CD14-positive monocyte (primary cell): ENCODE measurements at regions of chr16 and their contacts with region 1.

Region 1: GRCh38 chr16:72978212-72978611 is 69.7 kb downstream of the ZFHX3 start:
- DNase-seq: peak; percentile 28 to 74 (median 42)
- H3K4me3 ChIP-seq: no peak overlapping the region
- H3K4me3 Mint-ChIP-seq: no peak overlapping the region
- H3K27ac ChIP-seq: peak overlapping the region in 1 of 2 donors; percentile 12
- H3K27ac Mint-ChIP-seq: peak overlapping the region; percentile 79 to 93 (median 89)
- H3K4me1 ChIP-seq: peaks cover 30 to 32% of the 10 kb centered on the region in 2 donors
- H3K4me1 Mint-ChIP-seq: peaks cover 33% of the 10 kb centered on the region
- H3K27me3 ChIP-seq: no peaks in the 10 kb centered on the region
- H3K27me3 Mint-ChIP-seq: peaks cover 0 to 3% (median 3%) of the 10 kb centered on the region in 3 donors
- CTCF ChIP-seq: no peak

Region 2: DNA sequence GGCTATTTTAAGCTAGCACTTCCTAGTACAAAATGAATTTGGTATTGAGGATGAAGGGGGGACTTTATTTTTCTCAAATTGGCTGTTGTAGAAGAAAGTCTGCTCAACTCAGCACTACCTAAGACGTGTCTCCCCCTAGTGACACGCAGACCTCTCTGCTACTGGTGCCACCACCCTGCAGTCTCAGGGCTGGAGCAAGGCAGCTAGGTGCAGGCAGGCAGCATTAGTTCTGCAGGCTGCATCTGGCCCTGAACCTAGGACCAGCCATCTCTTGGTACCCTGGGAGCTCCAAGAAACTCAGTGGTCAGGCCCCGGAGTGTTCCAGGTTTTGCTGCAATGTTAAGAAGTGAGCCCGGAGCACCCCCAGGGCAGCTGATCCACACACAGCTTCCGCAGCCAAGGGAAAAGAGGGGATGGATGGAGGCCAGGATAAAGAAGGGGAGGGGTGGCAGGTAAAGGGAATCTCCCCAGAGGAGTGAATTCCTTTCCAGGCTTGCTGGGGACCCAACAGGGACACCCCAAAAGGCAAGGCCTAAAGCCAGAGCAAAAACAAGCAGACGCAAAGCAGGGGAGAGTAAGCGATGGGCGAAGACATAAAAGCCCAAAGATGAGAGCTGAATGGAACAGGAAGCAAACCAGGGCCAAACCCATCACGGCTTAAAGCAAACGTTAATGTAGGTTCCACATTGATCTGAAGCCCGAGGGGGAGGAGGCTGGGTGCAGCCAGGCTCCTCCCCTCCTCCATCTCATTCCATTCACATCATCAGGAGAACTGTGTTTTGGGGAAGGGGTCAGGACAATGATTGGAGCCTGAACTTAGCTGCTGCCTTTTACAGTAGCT is 130.8 kb before region 1 on chr16:
- intact Hi-C with region 1: loop called in 1 of 2 experiments (anchors 10 kb)
- DNase-seq: no peak
- H3K4me3 ChIP-seq: no peak overlapping the region
- H3K4me3 Mint-ChIP-seq: no peak overlapping the region
- H3K27ac ChIP-seq: no peak overlapping the region
- H3K27ac Mint-ChIP-seq: peak overlapping the region in 4 of 7 donors; percentile 1 to 81 (median 56)
- H3K4me1 ChIP-seq: peaks cover 27 to 40% of the 10 kb centered on the region in 2 donors
- H3K4me1 Mint-ChIP-seq: peaks cover 50% of the 10 kb centered on the region
- H3K27me3 ChIP-seq: no peaks in the 10 kb centered on the region
- H3K27me3 Mint-ChIP-seq: peaks cover 2 to 3% (median 2%) of the 10 kb centered on the region in 3 donors
- CTCF ChIP-seq: no peak

Region 3: DNA sequence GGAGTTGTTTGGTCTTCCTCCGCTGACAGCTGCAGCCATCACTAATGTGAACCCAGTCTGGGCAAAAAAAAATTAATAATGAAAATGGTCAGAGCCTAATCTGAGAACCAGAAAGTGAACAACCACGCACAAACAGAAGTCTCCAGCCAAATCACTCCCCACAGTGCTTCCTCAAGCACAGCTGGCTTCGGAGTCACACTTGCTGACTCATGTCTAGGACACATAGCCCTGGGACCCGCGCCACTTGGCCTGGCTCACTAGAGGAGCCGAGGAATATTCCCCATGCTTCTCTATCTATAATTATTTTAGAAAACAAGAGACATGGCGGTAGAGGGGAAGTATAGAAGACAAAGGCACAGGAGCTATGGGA is 39.4 kb before region 1 on chr16:
- intact Hi-C with region 1: loop called in 1 of 2 experiments (anchors 5 kb)
- DNase-seq: peak; percentile 67 to 83 (median 82)
- H3K4me3 ChIP-seq: no peak overlapping the region
- H3K4me3 Mint-ChIP-seq: peak overlapping the region in 1 of 2 donors; percentile 62
- H3K27ac ChIP-seq: peak overlapping the region; percentile 39 to 51
- H3K27ac Mint-ChIP-seq: peak overlapping the region; percentile 63 to 95 (median 80)
- H3K4me1 ChIP-seq: peaks cover 24 to 28% of the 10 kb centered on the region in 2 donors
- H3K4me1 Mint-ChIP-seq: peaks cover 33% of the 10 kb centered on the region
- H3K27me3 ChIP-seq: no peaks in the 10 kb centered on the region
- H3K27me3 Mint-ChIP-seq: peaks cover 0 to 2% (median 0%) of the 10 kb centered on the region in 3 donors
- CTCF ChIP-seq: no peak

Region 4: GRCh38 chr16:73032541-73033267 is 54.5 kb after region 1 on chr16:
- intact Hi-C with region 1: no loop called
- DNase-seq: peak in 1 of 3 donors; percentile 11
- H3K4me3 ChIP-seq: no peak overlapping the region
- H3K4me3 Mint-ChIP-seq: peak overlapping the region; percentile 41 to 71
- H3K27ac ChIP-seq: no peak overlapping the region
- H3K27ac Mint-ChIP-seq: peak overlapping the region in 4 of 7 donors; percentile 62 to 77 (median 66)
- H3K4me1 ChIP-seq: peaks cover 31 to 33% of the 10 kb centered on the region in 2 donors
- H3K4me1 Mint-ChIP-seq: peaks cover 44% of the 10 kb centered on the region
- H3K27me3 ChIP-seq: peaks cover 2 to 16% of the 10 kb centered on the region in 2 donors
- H3K27me3 Mint-ChIP-seq: peaks cover 27 to 42% (median 33%) of the 10 kb centered on the region in 3 donors
- CTCF ChIP-seq: no peak

Region 5: GRCh38 chr16:73143576-73144422 is 165.6 kb after region 1 on chr16:
- intact Hi-C with region 1: no loop called
- DNase-seq: no peak
- H3K4me3 ChIP-seq: no peak overlapping the region
- H3K4me3 Mint-ChIP-seq: no peak overlapping the region
- H3K27ac ChIP-seq: no peak overlapping the region
- H3K27ac Mint-ChIP-seq: no peak overlapping the region
- H3K4me1 ChIP-seq: peaks cover 13 to 20% of the 10 kb centered on the region in 2 donors
- H3K4me1 Mint-ChIP-seq: peaks cover 16% of the 10 kb centered on the region
- H3K27me3 ChIP-seq: no peaks in the 10 kb centered on the region
- H3K27me3 Mint-ChIP-seq: peaks cover 0 to 3% (median 0%) of the 10 kb centered on the region in 3 donors
- CTCF ChIP-seq: no peak

Region 6: GRCh38 chr16:73196670-73197069 is 218.5 kb after region 1 on chr16:
- intact Hi-C with region 1: loop called in 1 of 2 experiments (anchors 10 kb)
- DNase-seq: peak; percentile 57 to 77 (median 73)
- H3K4me3 ChIP-seq: no peak overlapping the region
- H3K4me3 Mint-ChIP-seq: no peak overlapping the region
- H3K27ac ChIP-seq: no peak overlapping the region
- H3K27ac Mint-ChIP-seq: no peak overlapping the region
- H3K4me1 ChIP-seq: peaks cover under 1% of the 10 kb centered on the region in 2 donors
- H3K4me1 Mint-ChIP-seq: peaks cover 5% of the 10 kb centered on the region
- H3K27me3 ChIP-seq: peaks cover 0 to 3% of the 10 kb centered on the region in 2 donors
- H3K27me3 Mint-ChIP-seq: peaks cover 3 to 7% (median 4%) of the 10 kb centered on the region in 3 donors
- CTCF ChIP-seq: peak; percentile 83